ENCODE measurements at regions of chrX and their contacts with region 1.

Region 1: GRCh38 chrX:136496770-136497598 is at the start of gene HTATSF1:
- DNase-seq: peak; percentile 66
- ATAC-seq: peak; percentile 85
- H3K4me3 ChIP-seq: peak within 1 kb of the TSS; percentile 77 to 84
- H3K27ac ChIP-seq: peak within 1 kb of the TSS; percentile 91
- H3K4me1 ChIP-seq: peaks cover 3 to 15% of the 10 kb centered on the region in 2 experiments; a peak in 2 of 4 replicates
- H3K27me3 ChIP-seq: no peaks in the 10 kb centered on the region
- CTCF ChIP-seq: no peak
- POLR2A ChIP-seq: peak; percentile 23
- RAD21 ChIP-seq: no peak
- total RNA-seq, gene HTATSF1: 39.7 TPM

Region 2: DNA sequence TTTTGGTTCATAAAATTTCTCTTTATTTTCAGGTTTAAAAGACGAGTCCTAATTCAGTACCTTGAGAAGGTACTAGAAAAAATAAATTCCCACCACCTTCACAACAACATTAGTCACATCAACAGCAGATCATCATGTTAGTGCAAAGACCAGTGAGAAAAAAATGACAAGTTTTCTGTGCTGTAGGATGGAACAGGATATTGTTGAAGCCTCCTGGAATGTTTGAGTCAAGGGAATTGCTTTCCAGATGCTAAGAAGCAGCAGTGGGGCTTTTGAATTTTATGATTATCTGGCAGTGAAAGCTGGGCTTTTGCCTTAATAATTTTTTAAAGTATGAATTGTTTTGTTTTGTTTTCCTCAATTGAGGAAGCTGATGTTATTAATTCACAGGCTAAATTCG is 915.5 kb before region 1 on chrX:
- CTCF ChIA-PET with region 1: no interaction called
- POLR2A ChIA-PET with region 1: no interaction called
- RAD21 ChIA-PET with region 1: no interaction called
- intact Hi-C with region 1: no loop called
- DNase-seq: no peak
- ATAC-seq: no peak
- H3K4me3 ChIP-seq: no peak overlapping the region
- H3K27ac ChIP-seq: no peak overlapping the region
- H3K4me1 ChIP-seq: no peaks in the 10 kb centered on the region
- H3K27me3 ChIP-seq: no peaks in the 10 kb centered on the region
- CTCF ChIP-seq: no peak
- POLR2A ChIP-seq: no peak
- RAD21 ChIP-seq: no peak

Region 3: DNA sequence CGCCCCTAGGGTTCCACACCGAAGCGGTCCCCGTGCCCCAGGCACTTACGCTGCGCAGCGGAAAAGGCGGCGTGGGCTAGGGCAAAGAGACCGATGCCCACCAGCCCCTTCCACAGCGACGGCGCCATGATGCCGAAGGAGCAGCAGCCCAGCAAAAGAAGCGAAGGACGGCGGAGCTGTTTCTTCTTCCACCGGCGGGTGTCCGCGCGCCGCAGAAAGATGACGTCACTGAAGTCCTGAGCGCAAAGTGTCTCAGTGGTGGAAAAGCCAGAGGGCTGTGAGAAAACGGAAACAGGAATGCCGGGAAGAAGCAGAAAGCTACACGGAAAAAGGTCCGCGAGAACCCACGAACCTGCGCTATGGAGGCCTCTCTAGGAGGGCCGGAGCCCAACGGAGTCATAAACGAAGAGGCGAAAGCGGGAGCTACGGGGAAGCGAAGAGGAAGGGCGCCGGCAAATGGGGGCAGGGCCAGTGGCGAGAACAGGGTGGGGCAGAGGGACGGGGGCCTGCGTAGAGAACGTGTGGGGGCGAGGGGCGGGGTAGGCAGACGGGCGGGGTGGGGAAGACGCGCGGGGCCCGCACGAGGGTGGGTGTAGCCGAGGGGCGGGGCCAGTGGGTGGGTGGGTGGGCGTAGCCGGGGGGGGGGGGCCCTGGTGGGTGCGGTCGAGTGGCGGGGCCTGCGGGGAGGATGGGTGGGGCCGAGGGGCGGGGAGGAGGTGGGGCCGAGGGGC is 523.3 kb before region 1 on chrX and contains the start of gene MMGT1:
- CTCF ChIA-PET with region 1: no interaction called
- POLR2A ChIA-PET with region 1: no interaction called
- RAD21 ChIA-PET with region 1: no interaction called
- intact Hi-C with region 1: loop called (anchors 2 kb)
- DNase-seq: peak; percentile 59
- ATAC-seq: peak; percentile 84
- H3K4me3 ChIP-seq: peak within 1 kb of the TSS; percentile 86
- H3K27ac ChIP-seq: peak within 1 kb of the TSS; percentile 79
- H3K4me1 ChIP-seq: peaks cover 6 to 8% of the 10 kb centered on the region in 2 experiments; a peak in 3 of 4 replicates
- H3K27me3 ChIP-seq: no peaks in the 10 kb centered on the region
- CTCF ChIP-seq: no peak
- POLR2A ChIP-seq: no peak
- RAD21 ChIP-seq: no peak
- total RNA-seq, gene MMGT1: 23.2 TPM

Region 4: GRCh38 chrX:136251041-136251991 is 245.7 kb before region 1 on chrX and contains the start of gene MAP7D3:
- CTCF ChIA-PET with region 1: no interaction called
- POLR2A ChIA-PET with region 1: no interaction called
- RAD21 ChIA-PET with region 1: no interaction called
- intact Hi-C with region 1: loop called (anchors 10 kb)
- DNase-seq: peak; percentile 16
- ATAC-seq: peak; percentile 85
- H3K4me3 ChIP-seq: peak within 1 kb of the TSS; percentile 58 to 65
- H3K27ac ChIP-seq: peak within 1 kb of the TSS; percentile 60
- H3K4me1 ChIP-seq: peaks cover 3 to 15% of the 10 kb centered on the region in 2 experiments
- H3K27me3 ChIP-seq: no peaks in the 10 kb centered on the region
- CTCF ChIP-seq: no peak
- POLR2A ChIP-seq: peak; percentile 37
- RAD21 ChIP-seq: no peak
- total RNA-seq, gene MAP7D3: 15.0 TPM

Region 5: GRCh38 chrX:136564698-136565097 is 67.7 kb after region 1 on chrX:
- CTCF ChIA-PET with region 1: no interaction called
- POLR2A ChIA-PET with region 1: no interaction called
- RAD21 ChIA-PET with region 1: no interaction called
- intact Hi-C with region 1: no loop called
- DNase-seq: no peak
- ATAC-seq: no peak
- H3K4me3 ChIP-seq: no peak overlapping the region
- H3K27ac ChIP-seq: no peak overlapping the region
- H3K4me1 ChIP-seq: no peaks in the 10 kb centered on the region
- H3K27me3 ChIP-seq: no peaks in the 10 kb centered on the region
- CTCF ChIP-seq: no peak
- POLR2A ChIP-seq: no peak
- RAD21 ChIP-seq: no peak

Region 6: DNA sequence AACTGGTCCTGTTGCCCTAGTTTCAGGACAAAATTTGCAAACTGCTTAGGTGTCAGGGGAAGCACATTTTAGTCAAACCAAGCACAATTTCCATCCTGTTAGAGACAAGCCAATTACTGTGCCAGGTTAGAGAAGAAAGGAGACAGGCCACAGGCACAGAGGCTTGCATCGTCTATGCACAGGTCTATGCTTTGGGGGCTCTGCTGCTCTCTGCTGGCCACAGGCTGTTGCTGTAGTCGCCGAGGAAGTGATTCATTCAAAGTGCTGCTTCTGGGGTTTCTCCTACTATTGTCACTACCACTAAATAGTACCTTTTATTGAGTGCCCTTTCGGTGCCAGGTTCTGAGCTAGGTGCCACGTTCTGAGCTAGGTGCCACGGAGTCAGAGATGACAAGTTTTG is 80.6 kb after region 1 on chrX:
- CTCF ChIA-PET with region 1: no interaction called
- POLR2A ChIA-PET with region 1: no interaction called
- RAD21 ChIA-PET with region 1: no interaction called
- intact Hi-C with region 1: loop called (anchors 5 kb)
- DNase-seq: peak; percentile 24
- ATAC-seq: peak; percentile 99
- H3K4me3 ChIP-seq: no peak overlapping the region
- H3K27ac ChIP-seq: no peak overlapping the region
- H3K4me1 ChIP-seq: 0 out of 4 replicates have a peak, but pooled peaks cover 0 to 4% of the 10 kb centered on the region in 2 experiments
- H3K27me3 ChIP-seq: no peaks in the 10 kb centered on the region
- CTCF ChIP-seq: peak; percentile 41 to 80 (median 61); a peak in 5 of 6 replicates
- POLR2A ChIP-seq: no peak
- RAD21 ChIP-seq: peak; percentile 61

Region 7: GRCh38 chrX:136665258-136665900 is 168.4 kb after region 1 on chrX:
- CTCF ChIA-PET with region 1: no interaction called
- POLR2A ChIA-PET with region 1: no interaction called
- RAD21 ChIA-PET with region 1: no interaction called
- intact Hi-C with region 1: no loop called
- DNase-seq: no peak
- ATAC-seq: no peak
- H3K4me3 ChIP-seq: no peak overlapping the region
- H3K27ac ChIP-seq: no peak overlapping the region
- H3K4me1 ChIP-seq: no peaks in the 10 kb centered on the region
- H3K27me3 ChIP-seq: no peaks in the 10 kb centered on the region
- CTCF ChIP-seq: no peak
- POLR2A ChIP-seq: no peak
- RAD21 ChIP-seq: no peak

Region 8: GRCh38 chrX:136694431-136695087 is 197.6 kb after region 1 on chrX:
- CTCF ChIA-PET with region 1: no interaction called
- POLR2A ChIA-PET with region 1: no interaction called
- RAD21 ChIA-PET with region 1: no interaction called
- intact Hi-C with region 1: loop called (anchors 10 kb)
- DNase-seq: peak; percentile 8
- ATAC-seq: peak; percentile 69
- H3K4me3 ChIP-seq: no peak overlapping the region
- H3K27ac ChIP-seq: no peak overlapping the region
- H3K4me1 ChIP-seq: no peaks in the 10 kb centered on the region
- H3K27me3 ChIP-seq: no peaks in the 10 kb centered on the region
- CTCF ChIP-seq: peak; percentile 40 to 60 (median 42); a peak in 5 of 6 replicates
- POLR2A ChIP-seq: no peak
- RAD21 ChIP-seq: peak; percentile 75

Region 9: DNA sequence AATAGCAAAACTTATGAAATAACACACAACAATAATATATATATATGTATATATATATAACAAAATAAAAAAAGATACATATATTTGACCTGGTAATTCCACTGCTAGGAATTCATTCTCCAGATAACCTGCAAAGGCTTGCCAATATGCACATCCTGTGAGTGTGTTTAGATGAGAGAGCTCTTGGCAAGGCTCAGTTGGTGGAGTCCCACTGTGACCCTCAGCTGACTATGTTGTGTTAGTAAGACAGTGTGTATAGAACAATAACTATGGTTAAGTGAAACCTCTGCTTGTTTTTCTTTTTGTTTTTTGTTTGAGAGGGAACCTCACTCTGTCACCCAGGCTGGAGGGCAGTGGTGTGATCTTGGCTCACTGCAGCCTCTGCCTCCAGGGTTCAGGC is 423.0 kb after region 1 on chrX:
- CTCF ChIA-PET with region 1: no interaction called
- POLR2A ChIA-PET with region 1: no interaction called
- RAD21 ChIA-PET with region 1: no interaction called
- intact Hi-C with region 1: no loop called
- DNase-seq: no peak
- ATAC-seq: no peak
- H3K4me3 ChIP-seq: no peak overlapping the region
- H3K27ac ChIP-seq: no peak overlapping the region
- H3K4me1 ChIP-seq: no peaks in the 10 kb centered on the region
- H3K27me3 ChIP-seq: no peaks in the 10 kb centered on the region
- CTCF ChIP-seq: no peak
- POLR2A ChIP-seq: no peak
- RAD21 ChIP-seq: no peak

Measured in HCT116 (cell line).